ENCODE measurements at regions of chr2 and their contacts with region 1.

Region 1: GRCh38 chr2:21317131-21317530 is 193.4 kb downstream of the TDRD15 start:
- DNase-seq: peak; percentile 8
- ATAC-seq: no peak
- H3K4me3 ChIP-seq: no peak overlapping the region
- H3K27ac ChIP-seq: no peak overlapping the region
- H3K4me1 ChIP-seq: no peaks in the 10 kb centered on the region
- H3K27me3 ChIP-seq: no peaks in the 10 kb centered on the region
- CTCF ChIP-seq: peak; percentile 28; the same call in 1 of the 2 replicates
- POLR2A ChIP-seq: no peak
- RAD21 ChIP-seq: peak; percentile 12; the same call in 1 of the 2 replicates

Region 2: GRCh38 chr2:20728114-20728758 is 588.9 kb before region 1 on chr2:
- CTCF ChIA-PET with region 1: no interaction called
- POLR2A ChIA-PET with region 1: no interaction called
- dilution Hi-C with region 1: no loop called
- in situ Hi-C with region 1: no loop called
- intact Hi-C with region 1: no loop called
- DNase-seq: peak; percentile 33
- ATAC-seq: peak; percentile 73
- H3K4me3 ChIP-seq: no peak overlapping the region
- H3K27ac ChIP-seq: no peak overlapping the region
- H3K4me1 ChIP-seq: peaks cover 6% of the 10 kb centered on the region; the same call in 1 of the 2 replicates
- H3K27me3 ChIP-seq: no peaks in the 10 kb centered on the region
- CTCF ChIP-seq: no peak
- POLR2A ChIP-seq: no peak
- RAD21 ChIP-seq: no peak

Region 3: GRCh38 chr2:21175895-21176646 is 141.1 kb before region 1 on chr2:
- CTCF ChIA-PET with region 1: interaction called, 5 read pairs
- POLR2A ChIA-PET with region 1: no interaction called
- dilution Hi-C with region 1: no loop called
- in situ Hi-C with region 1: no loop called
- intact Hi-C with region 1: loop called (anchors 10 kb)
- DNase-seq: peak; percentile 18
- ATAC-seq: no peak
- H3K4me3 ChIP-seq: no peak overlapping the region
- H3K27ac ChIP-seq: no peak overlapping the region
- H3K4me1 ChIP-seq: no peaks in the 10 kb centered on the region
- H3K27me3 ChIP-seq: no peaks in the 10 kb centered on the region
- CTCF ChIP-seq: peak; percentile 38; the same call in 1 of the 2 replicates
- POLR2A ChIP-seq: no peak
- RAD21 ChIP-seq: peak; percentile 44

Region 4: GRCh38 chr2:21194858-21195271 is 122.3 kb before region 1 on chr2:
- CTCF ChIA-PET with region 1: no interaction called
- POLR2A ChIA-PET with region 1: no interaction called
- dilution Hi-C with region 1: no loop called
- in situ Hi-C with region 1: no loop called
- intact Hi-C with region 1: no loop called
- DNase-seq: no peak
- ATAC-seq: no peak
- H3K4me3 ChIP-seq: no peak overlapping the region
- H3K27ac ChIP-seq: no peak overlapping the region
- H3K4me1 ChIP-seq: no peaks in the 10 kb centered on the region
- H3K27me3 ChIP-seq: no peaks in the 10 kb centered on the region
- CTCF ChIP-seq: no peak
- POLR2A ChIP-seq: no peak
- RAD21 ChIP-seq: no peak

Region 5: DNA sequence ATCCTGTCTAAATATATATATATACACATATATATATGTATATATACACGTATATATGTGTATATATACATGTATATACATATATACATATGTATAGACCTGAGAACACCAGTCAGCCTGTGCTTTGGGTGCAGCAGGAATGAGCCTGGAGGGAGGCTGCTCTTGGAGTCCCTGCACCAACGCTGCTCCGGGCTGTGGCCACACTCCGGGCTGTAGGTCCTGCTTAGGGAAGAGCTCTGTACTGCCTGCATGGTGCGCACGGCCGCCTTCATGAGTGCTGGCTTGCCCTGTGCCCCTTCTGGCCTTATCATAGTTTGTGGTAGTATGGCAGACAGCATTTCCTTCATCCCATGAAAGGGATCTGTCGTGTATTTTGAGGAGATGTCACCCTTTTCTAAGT is 167.5 kb after region 1 on chr2:
- CTCF ChIA-PET with region 1: no interaction called
- POLR2A ChIA-PET with region 1: interaction called, 10 read pairs
- dilution Hi-C with region 1: no loop called
- in situ Hi-C with region 1: no loop called
- intact Hi-C with region 1: no loop called
- DNase-seq: no peak
- ATAC-seq: no peak
- H3K4me3 ChIP-seq: no peak overlapping the region
- H3K27ac ChIP-seq: no peak overlapping the region
- H3K4me1 ChIP-seq: no peaks in the 10 kb centered on the region
- H3K27me3 ChIP-seq: no peaks in the 10 kb centered on the region
- CTCF ChIP-seq: no peak
- POLR2A ChIP-seq: no peak
- RAD21 ChIP-seq: no peak

Measured in IMR-90 (cell line).